ENCODE measurements at regions of chrX and their contacts with region 1.

Region 1: GRCh38 chrX:13658602-13659001 is 5.7 kb downstream of the TCEANC start:
- DNase-seq: no peak
- ATAC-seq: peak in 1 of 2 donors; percentile 61

Region 2: GRCh38 chrX:13212191-13212651 is 446.4 kb before region 1 on chrX:
- intact Hi-C with region 1: no loop called
- DNase-seq: no peak
- ATAC-seq: peak; percentile 44 to 47

Region 3: DNA sequence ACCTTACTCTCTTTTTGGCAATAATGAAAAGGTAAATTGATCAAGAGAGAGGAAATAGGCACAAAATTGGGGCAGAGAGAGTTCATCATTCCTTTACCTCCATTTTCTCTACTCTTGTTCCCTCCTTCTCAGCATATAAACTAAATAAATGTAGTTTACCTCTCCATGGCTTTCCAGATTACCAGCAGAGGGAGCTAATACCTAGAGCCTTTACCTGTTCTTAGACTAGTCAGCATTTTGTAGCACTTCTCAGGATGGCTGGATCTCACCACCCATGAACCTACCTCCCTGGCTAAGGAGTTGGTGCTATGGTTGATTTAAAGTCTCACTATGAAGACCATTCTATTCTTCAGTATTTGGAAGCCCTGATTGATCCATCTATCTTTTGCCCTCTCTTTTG is 91.6 kb after region 1 on chrX:
- intact Hi-C with region 1: loop called (anchors 5 kb)
- DNase-seq: no peak
- ATAC-seq: peak in 1 of 2 donors; percentile 30

Region 4: GRCh38 chrX:13923845-13924244 is 265.2 kb after region 1 on chrX:
- intact Hi-C with region 1: no loop called
- DNase-seq: no peak
- ATAC-seq: no peak

Region 5: DNA sequence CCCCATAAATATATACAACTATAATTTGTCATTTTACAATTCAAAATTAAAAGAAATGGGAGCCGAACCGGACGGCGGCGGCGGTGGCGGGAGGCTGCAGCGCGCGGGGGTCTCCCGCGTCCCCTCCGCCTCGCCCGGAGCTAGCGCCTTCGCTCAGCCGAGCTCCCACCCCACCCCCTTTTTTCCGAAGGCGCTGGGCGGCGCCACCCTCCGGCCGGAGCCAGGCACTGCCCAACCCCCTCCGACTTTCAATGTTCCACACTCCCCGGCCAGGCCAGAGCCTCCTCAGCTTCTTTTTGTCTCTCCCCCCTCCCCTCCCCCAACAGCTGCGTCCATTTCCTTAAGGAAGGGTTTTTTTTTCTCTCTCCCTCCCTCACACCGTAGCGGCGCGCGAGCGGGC is 585.2 kb after region 1 on chrX:
- intact Hi-C with region 1: no loop called
- DNase-seq: no peak
- ATAC-seq: no peak